Mammary epithelial cell (primary cell): ENCODE measurements at regions of chr11 and their contacts with region 1.

Region 1: DNA sequence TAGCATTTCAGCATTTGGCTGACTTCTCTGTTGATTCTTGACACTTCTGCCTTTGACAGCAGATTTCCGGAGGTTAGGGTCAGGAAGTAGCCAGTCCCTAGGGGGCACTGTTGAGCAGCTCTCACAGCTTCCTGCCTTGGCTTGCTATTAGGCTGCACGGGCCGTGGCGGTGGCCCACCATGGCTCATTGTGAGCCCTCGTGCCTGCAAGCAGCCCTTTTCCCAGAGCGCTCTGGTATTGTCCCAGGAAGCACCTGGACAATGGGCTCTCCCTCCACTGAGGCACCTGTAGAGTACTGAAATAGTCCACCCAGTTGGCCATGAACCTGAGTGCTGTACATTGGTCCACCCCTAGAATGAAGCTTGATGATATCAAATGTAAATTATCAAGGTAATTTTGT is 100.2 kb upstream of the GAL start:
- DNase-seq: peak; percentile 3
- H3K4me3 ChIP-seq: no peak overlapping the region
- H3K27ac ChIP-seq: no peak overlapping the region
- H3K4me1 ChIP-seq: peaks cover 8% of the 10 kb centered on the region
- H3K27me3 ChIP-seq: no peaks in the 10 kb centered on the region
- CTCF ChIP-seq: peak; percentile 67 to 71

Region 2: DNA sequence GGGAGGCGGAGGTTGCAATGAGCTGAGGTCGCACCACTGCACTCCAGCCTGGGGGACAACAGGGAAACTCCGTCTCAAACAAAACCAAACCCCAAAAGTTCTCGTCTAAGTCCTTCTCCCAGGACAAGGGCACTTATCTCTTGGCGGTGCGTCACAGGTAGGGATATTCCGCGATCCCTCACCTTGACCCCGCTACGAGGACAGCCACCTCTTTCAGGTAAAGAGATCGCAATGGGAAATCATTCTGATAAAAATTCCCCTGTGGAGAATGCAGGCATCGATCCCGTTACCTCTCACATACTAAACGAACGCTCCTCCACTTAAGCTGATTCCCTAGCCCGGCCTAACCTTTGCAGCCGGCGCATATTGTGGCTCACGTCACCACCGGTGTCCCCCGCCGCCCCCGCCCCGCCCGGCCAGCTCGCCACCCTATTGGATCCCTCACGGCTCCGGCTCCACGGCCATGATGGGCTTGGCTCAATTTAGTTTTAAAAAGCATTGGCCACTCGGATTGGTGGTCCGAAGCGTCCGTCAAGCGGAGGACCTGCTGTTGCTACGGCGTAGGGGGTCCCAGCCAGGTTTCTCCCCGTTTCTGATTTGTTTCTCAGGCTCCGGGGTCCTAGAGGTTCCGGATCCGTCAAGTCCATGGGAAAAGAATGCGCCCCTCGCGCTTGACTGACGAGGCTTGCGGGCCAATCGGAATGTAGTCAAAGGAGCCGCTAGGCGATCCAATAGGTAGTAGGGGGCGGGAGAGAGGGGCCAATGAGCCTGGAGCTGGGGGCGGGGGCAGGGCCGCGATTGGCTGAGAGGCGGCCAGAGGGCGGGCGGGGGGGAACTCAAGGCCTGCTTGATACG is 124.0 kb before region 1 on chr11:
- CTCF ChIA-PET with region 1: no interaction called
- dilution Hi-C with region 1: no loop called
- in situ Hi-C with region 1: no loop called
- intact Hi-C with region 1: loop called (anchors 5 kb)
- DNase-seq: peak; percentile 97
- H3K4me3 ChIP-seq: peak overlapping the region; percentile 86 to 93 (median 89)
- H3K27ac ChIP-seq: peak overlapping the region; percentile 89
- H3K4me1 ChIP-seq: peaks cover 12% of the 10 kb centered on the region
- H3K27me3 ChIP-seq: no peaks in the 10 kb centered on the region
- CTCF ChIP-seq: no peak

Region 3: DNA sequence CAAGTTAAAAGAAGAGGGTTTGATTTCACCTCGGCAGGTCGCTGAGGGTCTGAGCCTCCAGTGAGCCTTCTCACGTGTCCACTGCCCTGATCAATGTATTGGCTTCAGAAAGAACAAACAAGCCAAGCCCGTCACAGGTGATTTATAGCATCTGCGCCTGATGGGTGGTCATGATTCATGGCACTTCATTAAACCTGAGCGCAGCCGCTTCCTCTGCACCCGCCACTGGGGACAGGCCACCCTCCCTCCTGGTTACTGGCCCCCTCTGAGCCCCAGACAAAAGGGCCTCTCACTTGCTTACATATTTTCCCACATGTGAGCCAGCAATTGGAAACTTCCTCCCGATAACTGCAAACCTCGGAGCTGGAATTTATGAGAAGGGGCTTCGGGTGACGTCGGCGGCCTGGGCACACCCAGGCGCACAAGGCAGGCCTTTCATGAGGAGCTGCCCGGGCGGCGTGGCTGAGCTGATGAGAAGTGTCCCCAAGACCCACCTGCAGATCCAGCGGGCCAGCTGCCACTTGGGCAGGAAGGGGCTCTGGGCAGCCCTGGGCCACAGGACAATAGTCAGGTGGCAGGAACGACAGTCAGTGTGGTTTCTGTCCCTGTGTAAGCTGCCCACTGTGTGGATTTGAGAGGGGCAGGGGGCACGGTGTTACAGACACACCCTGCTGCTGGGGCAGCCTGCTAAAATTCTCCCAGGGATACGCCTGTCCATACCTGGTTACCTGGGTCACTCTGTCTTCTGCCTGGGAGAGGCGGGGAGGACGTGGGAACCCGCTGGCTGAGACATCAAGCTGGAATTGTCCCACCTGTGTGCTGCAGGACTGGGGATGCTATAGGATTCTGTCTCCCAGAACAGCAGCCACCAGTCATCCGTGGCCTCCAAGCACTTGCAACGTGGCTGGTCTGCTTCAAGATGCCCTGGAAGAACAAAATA is 833.3 kb after region 1 on chr11:
- CTCF ChIA-PET with region 1: no interaction called
- dilution Hi-C with region 1: no loop called
- in situ Hi-C with region 1: no loop called
- intact Hi-C with region 1: no loop called
- DNase-seq: no peak
- H3K4me3 ChIP-seq: no peak overlapping the region
- H3K27ac ChIP-seq: no peak overlapping the region
- H3K4me1 ChIP-seq: peaks cover 18% of the 10 kb centered on the region
- H3K27me3 ChIP-seq: no peaks in the 10 kb centered on the region
- CTCF ChIP-seq: no peak